PC-9 (cell line): ENCODE measurements at regions of chr7 and their contacts with region 1.

Region 1: DNA sequence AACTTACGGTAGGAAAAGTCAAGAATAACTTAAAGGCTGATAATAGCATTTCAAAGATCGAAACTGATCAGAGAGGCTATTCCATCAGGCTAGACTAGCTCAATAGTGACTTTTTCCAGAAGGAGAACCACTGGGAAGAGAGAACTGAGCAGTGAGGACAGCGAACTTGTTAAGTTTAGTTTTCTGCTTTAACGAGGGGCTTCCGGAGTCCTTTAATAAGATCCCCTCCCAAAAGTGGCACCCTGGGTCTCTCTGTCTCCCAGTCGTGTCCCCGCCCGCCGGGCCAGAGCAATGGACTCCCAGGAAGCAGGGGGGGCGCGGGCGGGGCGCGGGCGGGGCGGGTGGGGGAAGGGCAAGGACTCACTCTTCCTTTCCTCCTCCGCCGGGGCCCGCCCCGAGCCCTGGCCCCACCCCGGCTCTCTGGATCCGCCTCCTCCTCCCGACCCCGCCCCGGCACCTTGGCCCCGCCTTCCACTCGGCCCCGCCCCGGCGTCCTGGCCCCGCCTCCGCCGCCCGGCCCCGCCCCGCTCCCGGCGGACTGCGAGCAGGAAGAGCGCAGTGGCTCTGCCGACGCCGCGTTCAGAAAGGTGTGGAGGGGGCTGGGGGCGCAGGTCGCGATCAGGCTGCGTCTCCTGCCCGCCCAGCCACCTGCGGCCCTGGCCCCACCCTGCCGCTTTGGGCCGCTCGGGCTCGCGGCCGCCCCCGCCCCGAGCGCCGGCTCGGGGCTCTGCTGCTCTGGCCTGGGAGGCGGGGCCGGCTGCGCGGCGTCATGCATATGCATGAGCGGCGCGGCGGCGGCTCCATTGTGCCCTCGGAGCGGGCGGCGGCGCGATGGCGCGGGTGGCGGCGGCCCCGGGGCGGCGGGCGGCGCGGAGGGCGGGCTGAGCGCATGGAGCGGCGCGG is at the start of gene ZMIZ2:
- DNase-seq: peak; percentile 77 to 97
- H3K4me3 ChIP-seq: peak within 1 kb of the TSS; percentile 92
- H3K27ac ChIP-seq: peak within 1 kb of the TSS; percentile 57
- H3K4me1 ChIP-seq: peaks cover 37% of the 10 kb centered on the region
- H3K27me3 ChIP-seq: no peaks in the 10 kb centered on the region
- CTCF ChIP-seq: no peak
- total RNA-seq, gene ZMIZ2: 97.5 and 142 TPM in 2 replicates

Region 2: GRCh38 chr7:44581879-44582603 is 166.3 kb before region 1 on chr7 and contains the start of gene TMED4:
- CTCF ChIA-PET with region 1: no interaction called
- POLR2A ChIA-PET with region 1: interaction called, 7 read pairs
- intact Hi-C with region 1: loop called (anchors 1 kb)
- DNase-seq: peak; percentile 97 to 100
- H3K4me3 ChIP-seq: peak within 1 kb of the TSS; percentile 92
- H3K27ac ChIP-seq: peak within 1 kb of the TSS; percentile 78
- H3K4me1 ChIP-seq: peaks cover 27% of the 10 kb centered on the region
- H3K27me3 ChIP-seq: no peaks in the 10 kb centered on the region
- CTCF ChIP-seq: no peak
- total RNA-seq, gene TMED4: 134 and 161 TPM in 2 replicates

Region 3: DNA sequence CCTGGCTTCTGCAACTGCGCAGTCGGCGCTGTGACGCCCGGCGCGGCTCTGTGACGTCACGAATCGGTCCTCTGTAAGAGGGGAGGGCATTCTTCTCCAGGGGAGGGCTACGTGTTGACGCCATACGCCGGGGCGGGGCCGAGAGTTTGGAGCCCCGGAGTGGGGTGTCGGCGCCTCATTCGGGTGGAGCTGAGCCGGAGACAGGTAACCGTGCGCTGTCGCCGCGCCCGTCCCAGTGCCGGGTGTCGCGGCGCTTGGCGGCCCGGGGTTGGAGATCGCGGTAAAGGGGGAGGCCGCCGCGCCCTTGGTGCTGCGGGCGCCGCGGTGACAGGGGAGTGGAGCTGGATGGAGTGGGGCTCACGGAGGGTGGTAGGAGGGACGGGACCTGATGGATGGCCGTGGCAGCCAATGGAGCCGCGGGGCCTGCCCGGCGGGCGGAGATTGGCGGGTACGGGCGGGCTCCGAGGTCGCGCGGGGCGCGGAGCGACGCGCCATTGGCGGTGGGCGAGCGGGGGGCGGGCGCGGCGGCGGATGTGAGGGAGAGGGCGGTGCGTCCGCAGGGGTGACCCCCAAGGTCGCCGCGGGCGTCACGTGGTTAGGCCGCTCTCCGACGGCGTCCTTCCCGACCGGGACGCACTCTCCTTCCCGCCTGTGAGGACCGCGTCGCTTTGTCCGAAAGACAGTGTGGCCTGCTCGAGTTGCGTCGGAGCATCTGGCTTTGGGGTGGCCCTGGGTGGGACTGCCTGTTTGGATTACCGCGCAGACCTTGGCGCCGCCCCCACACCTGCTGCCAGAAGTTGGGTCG is 141.6 kb before region 1 on chr7 and contains the start of gene OGDH:
- CTCF ChIA-PET with region 1: no interaction called
- POLR2A ChIA-PET with region 1: no interaction called
- intact Hi-C with region 1: loop called (anchors 1 kb)
- DNase-seq: peak; percentile 98 to 100
- H3K4me3 ChIP-seq: peak within 1 kb of the TSS; percentile 81
- H3K27ac ChIP-seq: peak within 1 kb of the TSS; percentile 73
- H3K4me1 ChIP-seq: peaks cover 60% of the 10 kb centered on the region
- H3K27me3 ChIP-seq: no peaks in the 10 kb centered on the region
- CTCF ChIP-seq: no peak
- total RNA-seq, gene OGDH: 93.6 and 135 TPM in 2 replicates

Region 4: GRCh38 chr7:44638611-44639557 is 109.4 kb before region 1 on chr7:
- CTCF ChIA-PET with region 1: no interaction called
- POLR2A ChIA-PET with region 1: interaction called, 3 read pairs
- intact Hi-C with region 1: loop called (anchors 1 kb)
- DNase-seq: peak; percentile 90 to 93
- H3K4me3 ChIP-seq: peak overlapping the region; percentile 12; the same call in 1 of the 2 replicates
- H3K27ac ChIP-seq: peak overlapping the region; percentile 96
- H3K4me1 ChIP-seq: peaks cover 67% of the 10 kb centered on the region
- H3K27me3 ChIP-seq: no peaks in the 10 kb centered on the region
- CTCF ChIP-seq: no peak; the same call in 1 of the 2 replicates

Region 5: GRCh38 chr7:44712012-44712411 is 36.3 kb before region 1 on chr7:
- CTCF ChIA-PET with region 1: no interaction called
- POLR2A ChIA-PET with region 1: interaction called, 3 read pairs
- intact Hi-C with region 1: loop called (anchors 1 kb)
- DNase-seq: peak; percentile 87 to 97
- H3K4me3 ChIP-seq: no peak overlapping the region
- H3K27ac ChIP-seq: peak overlapping the region; percentile 69
- H3K4me1 ChIP-seq: peaks cover 52% of the 10 kb centered on the region
- H3K27me3 ChIP-seq: no peaks in the 10 kb centered on the region
- CTCF ChIP-seq: no peak

Region 6: GRCh38 chr7:44727158-44727933 is 20.9 kb before region 1 on chr7:
- CTCF ChIA-PET with region 1: no interaction called
- POLR2A ChIA-PET with region 1: no interaction called
- intact Hi-C with region 1: no loop called
- DNase-seq: peak in 1 of 2 experiments; percentile 82
- H3K4me3 ChIP-seq: no peak overlapping the region
- H3K27ac ChIP-seq: peak overlapping the region; percentile 69
- H3K4me1 ChIP-seq: peaks cover 24% of the 10 kb centered on the region
- H3K27me3 ChIP-seq: no peaks in the 10 kb centered on the region
- CTCF ChIP-seq: no peak

Region 7: DNA sequence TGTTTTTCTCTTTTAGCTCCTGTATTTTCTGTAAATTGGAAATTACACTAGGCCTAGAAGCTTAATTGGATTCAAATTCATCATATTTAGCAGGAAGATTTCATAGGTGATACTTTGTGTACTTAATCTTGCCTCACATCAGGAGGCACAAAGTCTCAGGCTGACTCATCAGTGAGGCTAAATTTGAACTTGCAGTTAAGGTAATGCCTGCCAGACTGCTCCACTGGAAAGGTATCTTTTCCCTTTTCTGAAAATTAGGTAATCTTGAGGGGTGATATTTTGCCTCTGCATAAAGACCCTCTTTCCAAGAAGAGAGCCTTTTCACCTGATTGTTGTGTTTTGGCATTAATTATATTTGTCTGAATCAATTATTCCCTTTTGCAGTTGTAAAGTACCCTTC is 62.8 kb after region 1 on chr7:
- CTCF ChIA-PET with region 1: no interaction called
- POLR2A ChIA-PET with region 1: interaction called, 15 read pairs
- intact Hi-C with region 1: no loop called
- DNase-seq: peak in 1 of 2 experiments; percentile 84
- H3K4me3 ChIP-seq: no peak overlapping the region
- H3K27ac ChIP-seq: peak overlapping the region; percentile 2; the same call in 1 of the 2 replicates
- H3K4me1 ChIP-seq: peaks cover 16% of the 10 kb centered on the region
- H3K27me3 ChIP-seq: no peaks in the 10 kb centered on the region
- CTCF ChIP-seq: no peak

Region 8: DNA sequence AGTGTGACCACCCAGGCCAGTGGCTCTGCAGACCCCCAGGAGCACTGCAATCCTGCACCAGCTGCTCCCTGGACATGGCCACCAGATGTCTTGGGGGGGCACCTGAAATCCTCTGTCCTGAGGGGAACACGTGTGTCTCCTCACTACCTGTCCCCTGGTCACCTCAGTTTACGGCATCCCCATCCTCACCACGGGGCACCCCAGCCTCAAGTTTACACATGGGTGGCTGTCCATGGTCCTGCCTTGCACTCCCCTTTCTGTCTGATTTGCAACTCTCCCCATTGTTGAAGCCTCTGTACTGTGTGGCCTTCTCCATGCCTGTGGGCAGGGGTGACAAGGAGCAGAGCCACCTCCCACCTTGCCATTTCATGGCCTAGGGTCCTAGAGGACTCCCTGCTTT is 476.5 kb after region 1 on chr7:
- CTCF ChIA-PET with region 1: no interaction called
- POLR2A ChIA-PET with region 1: no interaction called
- intact Hi-C with region 1: no loop called
- DNase-seq: no peak
- H3K4me3 ChIP-seq: no peak overlapping the region
- H3K27ac ChIP-seq: no peak overlapping the region
- H3K4me1 ChIP-seq: no peaks in the 10 kb centered on the region
- H3K27me3 ChIP-seq: peaks cover 99% of the 10 kb centered on the region
- CTCF ChIP-seq: no peak